K562 (cell line): ENCODE measurements at regions of chr14 and their contacts with region 1.

Region 1: DNA sequence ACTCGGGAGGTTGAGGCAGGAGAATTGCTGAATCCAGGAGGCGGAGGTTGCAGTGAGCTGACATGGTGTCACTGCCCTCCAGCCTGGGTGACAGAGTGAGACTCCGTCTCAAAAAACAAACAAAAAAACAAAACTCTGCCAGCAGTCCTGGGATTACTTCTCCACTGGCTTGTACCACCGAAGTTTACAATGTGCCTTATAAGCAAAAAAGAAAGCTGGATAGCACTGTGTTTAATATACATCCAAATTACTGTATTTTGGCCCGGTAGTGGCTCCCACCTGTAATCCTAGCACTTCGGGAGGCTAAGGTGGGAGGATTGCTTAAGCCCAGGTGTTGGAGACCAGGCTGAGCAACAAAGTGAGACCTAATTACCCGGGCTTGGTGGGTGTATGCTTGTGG is 16.7 kb downstream of the HOMEZ start:
- DNase-seq: no peak
- ATAC-seq: no peak
- H3K4me3 ChIP-seq: no peak overlapping the region
- H3K27ac ChIP-seq: no peak overlapping the region
- H3K4me1 ChIP-seq: peaks cover 2 to 3% of the 10 kb centered on the region in 2 experiments; a peak in 2 of 5 replicates
- H3K27me3 ChIP-seq: no peaks in the 10 kb centered on the region
- CTCF ChIP-seq: no peak
- EP300 ChIP-seq: no peak
- POLR2A ChIP-seq: no peak
- RAD21 ChIP-seq: no peak

Region 2: GRCh38 chr14:22781586-22781991 is 487.6 kb before region 1 on chr14:
- CTCF ChIA-PET with region 1: no interaction called
- POLR2A ChIA-PET with region 1: no interaction called
- in situ Hi-C with region 1: no loop called
- intact Hi-C with region 1: loop called (anchors 10 kb)
- DNase-seq: no peak
- ATAC-seq: no peak
- H3K4me3 ChIP-seq: no peak overlapping the region
- H3K27ac ChIP-seq: no peak overlapping the region
- H3K4me1 ChIP-seq: peaks cover 0 to 8% of the 10 kb centered on the region in 2 experiments; a peak in 3 of 5 replicates
- H3K27me3 ChIP-seq: no peaks in the 10 kb centered on the region
- CTCF ChIP-seq: no peak
- EP300 ChIP-seq: no peak
- POLR2A ChIP-seq: no peak
- RAD21 ChIP-seq: no peak

Region 3: DNA sequence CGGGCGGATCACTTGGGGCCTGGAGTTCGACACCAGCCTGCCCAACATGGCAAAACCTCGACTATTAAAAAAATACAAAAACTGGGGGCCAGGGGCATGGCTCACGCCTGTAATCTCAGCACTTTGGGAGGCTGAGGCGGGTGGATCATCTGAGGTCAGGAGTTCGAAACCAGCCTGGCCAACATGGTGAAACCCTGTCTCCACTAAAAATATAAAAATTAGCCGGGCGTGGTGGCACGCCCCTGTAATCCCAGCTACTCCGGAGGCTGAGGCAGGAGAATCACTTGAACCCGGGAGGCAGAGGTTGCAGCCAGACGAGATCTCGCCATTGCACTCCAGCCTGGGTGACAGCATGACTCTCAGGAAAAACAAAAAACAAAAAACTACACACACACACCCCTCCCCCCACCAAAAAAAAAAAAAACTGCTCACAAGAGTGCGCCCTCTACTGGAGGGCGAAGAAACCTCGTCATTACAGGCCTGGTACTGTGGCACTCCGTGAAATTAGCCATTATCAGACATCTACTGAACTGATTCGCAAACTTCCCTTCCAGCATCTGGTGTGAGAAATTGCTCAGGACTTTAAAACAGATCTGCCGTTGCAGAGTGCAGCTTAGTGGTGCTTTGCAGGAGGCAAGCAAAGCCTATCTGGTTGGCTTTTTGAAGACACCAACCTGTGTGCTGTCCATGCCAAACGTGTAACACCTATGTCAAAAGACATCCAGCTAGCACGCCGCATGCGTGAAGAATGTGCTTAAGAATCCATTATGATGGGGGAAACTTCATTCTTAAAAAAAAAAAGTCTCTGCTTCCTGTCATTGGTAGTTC is 25.8 kb after region 1 on chr14:
- CTCF ChIA-PET with region 1: interaction called, 58 read pairs
- POLR2A ChIA-PET with region 1: interaction called, 4 read pairs
- in situ Hi-C with region 1: no loop called
- intact Hi-C with region 1: loop called (anchors 1 kb)
- DNase-seq: peak; percentile 21 to 84 (median 35)
- ATAC-seq: peak; percentile 88
- H3K4me3 ChIP-seq: no peak overlapping the region
- H3K27ac ChIP-seq: peak overlapping the region; percentile 31; the same call in 2 of the 3 replicates
- H3K4me1 ChIP-seq: peaks cover 10 to 19% of the 10 kb centered on the region in 2 experiments
- H3K27me3 ChIP-seq: no peaks in the 10 kb centered on the region
- CTCF ChIP-seq: peak; percentile 81 to 88 (median 85)
- EP300 ChIP-seq: peak; percentile 73; the same call in 1 of the 2 replicates
- POLR2A ChIP-seq: no peak; the same call in 1 of the 2 replicates
- RAD21 ChIP-seq: peak in 1 of 2 experiments; percentile 48; a peak in 3 of 4 replicates

Region 4: DNA sequence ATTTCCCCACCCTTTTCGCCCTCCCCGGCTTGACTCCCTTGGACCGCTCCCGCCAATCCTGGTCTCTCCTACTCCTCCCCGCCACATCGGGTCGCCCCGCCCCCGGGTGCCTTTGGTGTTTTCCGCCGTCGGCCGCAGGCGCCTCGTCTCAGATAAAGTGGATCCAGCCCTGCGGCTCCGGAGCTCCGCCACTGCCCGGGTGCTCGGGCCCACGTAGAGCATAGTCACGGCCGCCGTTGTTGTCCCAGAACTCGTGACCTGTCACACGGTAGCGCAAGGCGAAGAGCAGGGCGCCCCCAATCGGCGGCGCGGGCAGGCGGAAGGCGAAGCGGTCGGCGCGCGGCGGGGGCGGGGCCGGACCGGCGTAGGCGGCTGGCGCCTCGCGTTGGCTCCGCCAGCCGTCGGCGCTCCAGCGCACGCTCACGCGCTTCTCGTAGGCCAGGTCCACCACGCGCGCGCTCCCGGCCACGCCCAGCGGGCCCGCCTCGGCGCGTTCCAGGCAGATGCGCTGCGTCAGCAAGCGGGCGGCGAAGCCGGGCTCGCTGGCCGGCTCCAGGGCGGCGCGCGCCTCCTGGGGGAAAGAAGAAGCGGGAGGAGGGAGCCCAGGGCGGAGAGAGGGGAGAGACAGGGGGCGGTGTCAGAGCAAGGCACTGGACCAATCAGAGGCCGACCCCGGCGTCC is 32.2 kb after region 1 on chr14:
- CTCF ChIA-PET with region 1: interaction called, 58 read pairs
- POLR2A ChIA-PET with region 1: interaction called, 3 read pairs
- in situ Hi-C with region 1: no loop called
- intact Hi-C with region 1: loop called (anchors 1 kb)
- DNase-seq: peak; percentile 94 to 99 (median 96)
- ATAC-seq: peak; percentile 90
- H3K4me3 ChIP-seq: peak overlapping the region; percentile 67
- H3K27ac ChIP-seq: peak overlapping the region; percentile 95
- H3K4me1 ChIP-seq: peaks cover 22 to 28% of the 10 kb centered on the region in 2 experiments
- H3K27me3 ChIP-seq: no peaks in the 10 kb centered on the region
- CTCF ChIP-seq: peak; percentile 65 to 76 (median 66)
- EP300 ChIP-seq: peak; percentile 81
- POLR2A ChIP-seq: no peak
- RAD21 ChIP-seq: peak; percentile 45 to 50

Region 5: DNA sequence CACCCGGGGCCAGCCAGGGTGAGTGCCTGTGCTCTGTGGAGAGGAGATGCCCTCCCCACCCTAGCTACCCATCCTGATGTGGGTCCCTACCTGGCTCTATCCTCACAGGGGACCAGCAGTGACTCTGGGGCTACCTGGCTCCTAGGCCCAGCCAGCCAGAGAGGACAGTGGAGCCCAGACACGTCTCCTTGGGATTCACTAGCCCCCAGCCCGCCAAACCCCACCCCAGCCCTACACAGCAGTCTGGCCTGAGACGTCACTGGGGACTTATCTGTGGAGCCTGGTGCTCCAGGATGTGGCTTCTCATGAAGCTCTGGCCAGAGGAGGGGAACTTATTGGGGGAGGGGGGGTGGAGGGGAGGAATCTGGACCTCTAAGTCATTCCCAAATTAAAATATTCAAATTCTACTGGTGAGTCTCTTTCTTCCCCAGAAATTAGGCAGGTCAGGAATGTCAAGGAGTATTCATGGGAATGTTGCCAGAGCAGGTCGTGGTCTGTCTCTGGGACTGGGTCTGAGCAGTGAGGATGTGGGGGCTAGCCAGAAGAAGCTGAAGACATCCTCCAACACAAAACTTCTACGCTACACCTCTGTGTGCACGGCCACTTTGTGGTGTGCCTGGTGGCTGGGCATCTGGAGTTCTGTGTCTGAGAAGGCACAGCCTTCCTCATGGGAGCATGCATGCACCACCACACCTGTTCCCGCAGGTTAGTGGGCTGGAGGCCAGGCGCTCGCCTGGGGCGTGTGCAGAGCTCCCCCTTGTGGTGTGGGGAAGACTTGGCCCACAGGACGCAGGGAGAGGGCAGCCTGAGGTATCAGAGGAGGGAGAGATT is 110.4 kb after region 1 on chr14:
- CTCF ChIA-PET with region 1: interaction called, 12 read pairs
- POLR2A ChIA-PET with region 1: no interaction called
- in situ Hi-C with region 1: loop called (anchors 10 kb)
- intact Hi-C with region 1: loop called (anchors 1 kb)
- DNase-seq: peak; percentile 63 to 79 (median 72)
- ATAC-seq: peak; percentile 92
- H3K4me3 ChIP-seq: no peak overlapping the region
- H3K27ac ChIP-seq: no peak overlapping the region
- H3K4me1 ChIP-seq: peaks cover 0 to 19% of the 10 kb centered on the region in 2 experiments; a peak in 2 of 5 replicates
- H3K27me3 ChIP-seq: peaks cover 2 to 61% of the 10 kb centered on the region in 2 experiments; a peak in 4 of 5 replicates
- CTCF ChIP-seq: peak; percentile 86 to 93 (median 89)
- EP300 ChIP-seq: no peak
- POLR2A ChIP-seq: no peak
- RAD21 ChIP-seq: peak; percentile 84 to 94

Region 6: GRCh38 chr14:23567192-23568020 is 298.2 kb after region 1 on chr14 and contains the start of gene AP1G2:
- CTCF ChIA-PET with region 1: no interaction called
- POLR2A ChIA-PET with region 1: no interaction called
- in situ Hi-C with region 1: loop called (anchors 10 kb)
- intact Hi-C with region 1: no loop called
- DNase-seq: peak; percentile 89 to 93 (median 90)
- ATAC-seq: peak; percentile 97
- H3K4me3 ChIP-seq: peak within 1 kb of the TSS; percentile 71
- H3K27ac ChIP-seq: peak within 1 kb of the TSS; percentile 48
- H3K4me1 ChIP-seq: peaks cover 12 to 36% of the 10 kb centered on the region in 2 experiments; a peak in 4 of 5 replicates
- H3K27me3 ChIP-seq: no peaks in the 10 kb centered on the region
- CTCF ChIP-seq: no peak
- EP300 ChIP-seq: no peak
- POLR2A ChIP-seq: peak; percentile 87
- RAD21 ChIP-seq: no peak
- polyA plus RNA-seq, gene AP1G2: 22.9 to 33.3 TPM